ENCODE measurements at regions of chr1 and their contacts with region 1.

Region 1: DNA sequence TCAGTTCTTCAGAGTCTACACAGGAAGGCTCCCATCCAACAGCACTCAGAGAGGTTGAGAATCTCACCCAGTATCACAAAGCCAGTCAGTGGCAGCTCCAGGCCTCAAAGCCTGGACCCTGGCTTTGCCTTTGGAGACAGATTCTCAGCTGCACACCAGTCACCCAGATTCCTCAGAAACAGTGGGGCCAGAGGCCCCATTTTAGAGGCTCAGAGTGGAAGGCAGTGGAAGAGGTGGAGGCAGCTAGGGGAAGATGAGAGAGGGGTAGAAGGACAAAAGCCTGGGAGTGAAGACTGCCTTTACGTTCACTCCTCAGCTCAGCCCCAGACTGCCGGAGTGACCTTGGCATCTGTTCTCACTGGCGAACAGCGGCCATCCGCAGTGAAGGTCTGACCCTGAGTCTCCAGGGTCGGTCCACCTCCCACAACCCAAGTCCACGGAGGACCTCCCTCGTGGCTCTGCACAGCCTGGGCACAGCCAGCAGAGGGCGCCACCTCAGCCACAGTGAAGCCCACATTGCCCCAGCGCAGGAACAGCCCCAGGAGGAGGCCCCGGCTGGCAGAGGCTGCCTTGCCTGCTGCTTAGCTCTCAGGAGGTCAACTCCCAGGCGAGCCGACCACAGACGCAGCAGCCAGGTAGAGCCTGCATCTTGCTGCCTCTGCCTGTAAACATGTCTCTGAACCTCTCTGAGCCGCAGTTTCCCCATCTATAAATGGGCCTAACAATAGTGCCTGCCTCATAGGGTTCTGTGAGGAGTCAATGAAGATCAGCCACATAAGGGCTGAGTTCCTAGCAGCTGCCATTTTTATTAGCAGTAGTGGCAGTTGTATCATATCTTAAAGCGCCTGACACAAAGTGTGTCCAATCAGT is 5.9 kb upstream of the FNDC5 start:
- DNase-seq: peak; percentile 56
- H3K4me3 Mint-ChIP-seq: no peak overlapping the region
- H3K27ac Mint-ChIP-seq: no peak overlapping the region
- H3K4me1 Mint-ChIP-seq: peaks cover 8% of the 10 kb centered on the region
- H3K27me3 Mint-ChIP-seq: peaks cover 33% of the 10 kb centered on the region

Region 2: DNA sequence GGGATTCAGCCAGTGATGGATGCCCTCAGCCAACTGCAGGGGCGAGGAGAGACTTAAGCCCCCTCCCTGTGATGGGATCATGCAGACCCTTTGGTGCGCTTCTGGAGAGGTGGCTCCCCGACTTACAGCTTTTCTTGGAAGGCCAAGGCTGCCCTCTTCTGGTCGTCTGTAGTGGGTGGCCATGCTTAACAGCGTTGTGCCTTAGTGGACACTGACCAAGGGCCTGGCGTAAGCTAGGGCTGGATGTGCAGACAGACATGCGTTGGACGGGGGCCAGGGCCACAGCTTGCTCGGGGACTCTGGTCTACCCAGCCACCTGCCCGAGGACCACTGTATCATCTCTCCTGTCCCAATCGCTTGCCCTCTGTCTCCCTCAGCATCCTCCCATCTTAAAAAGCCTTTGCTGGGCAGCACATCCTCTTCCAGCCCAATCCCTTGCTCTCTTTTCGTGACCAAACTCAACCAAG is 209.8 kb after region 1 on chr1:
- intact Hi-C with region 1: loop called (anchors 1 kb)
- DNase-seq: no peak
- H3K4me3 Mint-ChIP-seq: no peak overlapping the region
- H3K27ac Mint-ChIP-seq: no peak overlapping the region
- H3K4me1 Mint-ChIP-seq: peaks cover 33% of the 10 kb centered on the region
- H3K27me3 Mint-ChIP-seq: peaks cover 28% of the 10 kb centered on the region